ENCODE measurements at regions of chr1 and their contacts with region 1.

Region 1: DNA sequence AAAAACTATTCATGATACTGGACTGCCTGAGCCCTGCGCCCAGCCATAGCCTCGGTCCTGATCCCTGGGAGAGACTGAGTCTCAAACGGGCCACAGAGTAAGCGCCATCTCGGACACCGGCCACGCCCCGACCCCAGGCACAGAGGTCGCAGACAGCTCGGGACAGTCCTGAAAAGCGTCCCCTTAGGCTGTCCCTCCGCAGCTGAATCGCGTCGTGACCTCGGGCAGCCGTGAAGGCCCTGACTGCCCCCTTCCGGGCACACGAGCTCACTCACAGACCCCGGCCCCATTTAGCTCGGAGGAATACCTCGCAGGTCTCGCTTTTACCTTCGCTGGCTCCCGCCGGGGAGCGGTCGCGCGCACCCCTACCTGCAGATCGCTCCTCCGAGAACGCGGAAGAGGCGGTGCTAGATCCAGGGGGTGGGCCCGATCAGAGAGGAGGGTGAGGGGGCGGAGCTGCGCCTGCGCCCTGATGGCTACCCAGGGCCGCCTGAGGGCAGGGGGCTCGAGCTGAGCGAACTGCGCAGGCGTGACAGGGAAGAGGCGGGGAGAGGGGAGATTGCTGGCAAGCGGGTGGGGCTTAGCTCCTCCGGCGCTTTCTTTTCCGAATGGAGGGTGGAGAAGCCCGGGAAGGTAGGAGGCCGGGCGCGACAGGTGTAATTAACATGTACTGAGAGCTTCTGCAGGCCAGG is at the start of gene MKNK1:
- DNase-seq: peak; percentile 100
- ATAC-seq: peak; percentile 93
- H3K4me3 Mint-ChIP-seq: peak within 1 kb of the TSS; percentile 89
- H3K27ac Mint-ChIP-seq: peak within 1 kb of the TSS; percentile 79
- H3K4me1 Mint-ChIP-seq: peaks cover 21% of the 10 kb centered on the region
- H3K27me3 Mint-ChIP-seq: no peaks in the 10 kb centered on the region
- CTCF ChIP-seq: no peak
- total RNA-seq, gene MKNK1: 17.5 to 18.6 TPM (median 18.0 TPM) in 3 replicates

Region 2: DNA sequence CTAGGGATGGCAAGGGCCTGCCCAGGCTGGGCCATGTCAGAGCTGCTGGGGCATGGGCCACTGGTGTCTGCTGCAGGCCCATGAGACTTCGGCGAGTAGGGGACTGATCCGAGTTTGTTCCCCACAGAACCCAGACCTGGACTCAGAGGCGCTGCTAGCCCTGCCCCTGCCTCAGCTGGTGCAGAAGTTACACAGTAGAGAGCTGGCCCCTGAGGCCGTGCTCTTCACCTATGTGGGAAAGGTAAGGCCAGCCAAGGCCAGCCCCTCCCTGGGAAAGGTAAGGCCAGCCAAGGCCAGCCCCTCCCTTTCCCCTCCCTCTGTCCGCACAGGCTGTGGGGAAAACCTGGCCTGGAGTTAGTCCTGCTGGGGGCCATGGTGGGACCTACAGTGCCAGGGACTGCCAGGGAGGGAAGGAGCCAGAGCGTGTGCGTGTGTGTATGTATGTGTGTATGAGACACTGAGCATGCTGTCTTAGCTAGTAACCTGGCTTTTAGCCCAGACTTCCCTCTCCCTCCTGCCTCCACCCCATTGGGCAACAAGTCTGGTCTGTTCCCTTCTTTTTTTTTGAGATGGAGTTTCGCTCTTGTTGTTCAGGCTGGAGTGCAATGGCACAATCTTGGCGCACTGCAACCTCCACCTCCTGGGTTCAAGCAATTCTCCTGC is 201.9 kb before region 1 on chr1:
- CTCF ChIA-PET with region 1: interaction called, 10 read pairs
- POLR2A ChIA-PET with region 1: no interaction called
- DNase-seq: peak; percentile 80
- ATAC-seq: peak; percentile 82
- H3K4me3 Mint-ChIP-seq: no peak overlapping the region
- H3K27ac Mint-ChIP-seq: no peak overlapping the region
- H3K4me1 Mint-ChIP-seq: peaks cover 39% of the 10 kb centered on the region
- H3K27me3 Mint-ChIP-seq: no peaks in the 10 kb centered on the region
- CTCF ChIP-seq: no peak

Region 3: GRCh38 chr1:46547481-46548383 is 56.3 kb before region 1 on chr1:
- CTCF ChIA-PET with region 1: interaction called, 15 read pairs
- POLR2A ChIA-PET with region 1: no interaction called
- DNase-seq: no peak
- ATAC-seq: peak; percentile 44
- H3K4me3 Mint-ChIP-seq: no peak overlapping the region
- H3K27ac Mint-ChIP-seq: no peak overlapping the region
- H3K4me1 Mint-ChIP-seq: peaks cover 34% of the 10 kb centered on the region
- H3K27me3 Mint-ChIP-seq: peaks cover 47% of the 10 kb centered on the region
- CTCF ChIP-seq: 0 out of 2 replicates have a peak, but pooled peaks have one; percentile 25

Region 4: GRCh38 chr1:46575300-46575699 is 28.7 kb before region 1 on chr1:
- CTCF ChIA-PET with region 1: interaction called, 16 read pairs
- POLR2A ChIA-PET with region 1: no interaction called
- DNase-seq: no peak
- ATAC-seq: peak; percentile 44
- H3K4me3 Mint-ChIP-seq: no peak overlapping the region
- H3K27ac Mint-ChIP-seq: peak overlapping the region; percentile 33; the same call in 1 of the 2 replicates
- H3K4me1 Mint-ChIP-seq: peaks cover 17% of the 10 kb centered on the region
- H3K27me3 Mint-ChIP-seq: no peaks in the 10 kb centered on the region
- CTCF ChIP-seq: no peak

Region 5: DNA sequence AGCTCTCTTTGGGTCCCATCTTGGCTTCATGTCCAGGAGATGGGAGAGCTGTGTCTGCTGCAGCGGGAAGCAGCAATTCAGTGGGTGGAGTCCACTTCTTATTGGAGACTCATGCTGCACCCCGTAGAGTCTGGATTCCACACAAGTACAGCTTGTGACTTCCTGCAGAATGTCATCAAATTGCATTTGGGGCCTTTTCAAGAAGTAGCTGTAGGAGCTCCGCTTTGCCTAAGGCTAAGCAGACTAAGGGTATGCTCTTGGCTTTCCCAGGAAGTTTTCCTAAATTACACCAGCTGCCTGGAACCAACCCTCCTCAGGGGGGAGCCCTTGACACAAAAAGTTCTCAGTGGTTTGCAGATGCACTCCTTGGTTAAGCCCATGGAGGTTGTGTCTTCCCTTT is 18.3 kb after region 1 on chr1:
- CTCF ChIA-PET with region 1: interaction called, 23 read pairs
- POLR2A ChIA-PET with region 1: interaction called, 13 read pairs
- DNase-seq: peak; percentile 59
- ATAC-seq: peak; percentile 93
- H3K4me3 Mint-ChIP-seq: no peak overlapping the region
- H3K27ac Mint-ChIP-seq: no peak overlapping the region
- H3K4me1 Mint-ChIP-seq: peaks cover 5% of the 10 kb centered on the region
- H3K27me3 Mint-ChIP-seq: peaks cover 21% of the 10 kb centered on the region
- CTCF ChIP-seq: peak; percentile 23; the same call in 1 of the 2 replicates

Region 6: DNA sequence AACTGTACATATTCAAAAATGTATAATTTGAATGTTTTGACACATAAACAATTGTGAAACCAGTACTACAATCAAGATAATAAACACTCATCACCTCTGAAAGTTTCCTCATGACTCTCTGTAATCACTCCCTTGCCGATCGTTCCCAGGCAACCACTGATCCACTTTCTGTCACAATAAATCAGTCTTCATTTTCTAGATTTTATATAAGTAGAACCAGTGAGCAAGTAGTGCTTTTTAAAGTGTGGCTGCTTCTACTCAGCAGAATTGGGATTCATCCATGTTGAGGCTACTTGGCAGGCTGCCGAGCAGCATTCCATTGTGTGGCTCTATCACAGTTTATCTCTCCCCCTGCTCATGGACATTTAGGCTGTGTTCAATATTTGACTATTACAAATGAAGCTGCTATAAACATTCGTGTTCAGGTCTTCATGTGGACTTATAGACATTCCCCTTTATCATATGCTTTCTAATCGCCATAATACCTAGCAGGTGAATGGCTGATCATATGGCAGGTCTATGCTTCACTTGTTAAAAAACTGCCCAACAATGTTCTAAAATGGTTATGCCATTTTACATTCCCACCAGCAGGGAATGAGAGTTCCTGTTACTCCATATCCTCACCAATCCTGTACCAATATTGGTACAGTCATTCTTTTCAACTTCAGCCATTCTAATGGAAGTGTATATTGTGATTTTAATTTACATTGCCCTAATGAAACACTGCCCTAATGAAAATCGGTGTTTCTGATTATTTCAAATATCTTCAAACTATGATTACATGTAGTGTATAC is 88.2 kb after region 1 on chr1:
- CTCF ChIA-PET with region 1: no interaction called
- POLR2A ChIA-PET with region 1: no interaction called
- DNase-seq: no peak
- ATAC-seq: no peak
- H3K4me3 Mint-ChIP-seq: no peak overlapping the region
- H3K27ac Mint-ChIP-seq: no peak overlapping the region
- H3K4me1 Mint-ChIP-seq: no peaks in the 10 kb centered on the region
- H3K27me3 Mint-ChIP-seq: no peaks in the 10 kb centered on the region
- CTCF ChIP-seq: no peak